Cardiac septum (tissue), 1 donor: ENCODE measurements at regions of chr6 and their contacts with region 1.

Region 1: DNA sequence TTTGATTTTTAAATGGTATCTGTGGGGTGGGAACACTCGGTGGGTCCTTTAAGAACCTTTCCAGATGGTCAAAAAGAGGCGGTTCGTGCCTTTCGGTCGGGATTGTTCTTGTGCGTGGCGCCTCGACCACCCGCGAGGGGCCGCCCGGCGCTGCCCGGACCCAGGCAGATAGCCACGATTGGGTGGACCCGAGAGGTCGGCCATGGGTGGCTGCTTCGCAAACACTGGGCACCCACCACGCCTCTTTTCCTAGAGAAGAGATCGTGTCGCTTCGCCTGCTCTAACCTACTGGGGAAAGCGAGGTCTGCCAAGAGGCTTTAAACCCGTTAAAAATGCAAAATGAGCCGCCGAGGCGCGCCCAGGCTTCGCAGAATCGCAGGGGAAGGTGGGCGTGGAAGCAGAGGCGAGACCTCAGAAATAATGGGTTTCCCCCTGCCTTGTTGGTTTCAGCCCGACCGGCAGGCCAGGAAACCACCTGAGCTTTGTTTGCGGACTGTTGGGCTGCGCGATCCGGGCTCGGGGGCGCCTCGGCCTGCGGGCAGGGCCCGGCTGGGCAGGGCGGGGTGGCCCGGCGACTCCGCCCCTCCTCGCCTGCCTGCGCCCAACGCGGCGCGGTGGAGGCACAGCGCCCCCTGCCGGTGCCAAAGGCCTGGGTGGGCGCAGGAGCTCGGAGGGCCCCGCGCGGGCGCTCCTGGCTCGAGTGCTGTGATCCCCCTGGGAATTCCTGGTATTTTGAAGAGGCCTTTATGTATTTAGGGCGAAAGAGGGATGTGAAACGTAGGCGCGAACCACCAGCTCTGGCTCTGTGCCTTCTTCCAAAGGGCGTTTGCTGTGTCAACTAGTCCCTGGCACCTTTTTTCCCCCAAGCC is 1.6 kb downstream of the MARCKS start:
- DNase-seq: peak; percentile 95

Region 2: DNA sequence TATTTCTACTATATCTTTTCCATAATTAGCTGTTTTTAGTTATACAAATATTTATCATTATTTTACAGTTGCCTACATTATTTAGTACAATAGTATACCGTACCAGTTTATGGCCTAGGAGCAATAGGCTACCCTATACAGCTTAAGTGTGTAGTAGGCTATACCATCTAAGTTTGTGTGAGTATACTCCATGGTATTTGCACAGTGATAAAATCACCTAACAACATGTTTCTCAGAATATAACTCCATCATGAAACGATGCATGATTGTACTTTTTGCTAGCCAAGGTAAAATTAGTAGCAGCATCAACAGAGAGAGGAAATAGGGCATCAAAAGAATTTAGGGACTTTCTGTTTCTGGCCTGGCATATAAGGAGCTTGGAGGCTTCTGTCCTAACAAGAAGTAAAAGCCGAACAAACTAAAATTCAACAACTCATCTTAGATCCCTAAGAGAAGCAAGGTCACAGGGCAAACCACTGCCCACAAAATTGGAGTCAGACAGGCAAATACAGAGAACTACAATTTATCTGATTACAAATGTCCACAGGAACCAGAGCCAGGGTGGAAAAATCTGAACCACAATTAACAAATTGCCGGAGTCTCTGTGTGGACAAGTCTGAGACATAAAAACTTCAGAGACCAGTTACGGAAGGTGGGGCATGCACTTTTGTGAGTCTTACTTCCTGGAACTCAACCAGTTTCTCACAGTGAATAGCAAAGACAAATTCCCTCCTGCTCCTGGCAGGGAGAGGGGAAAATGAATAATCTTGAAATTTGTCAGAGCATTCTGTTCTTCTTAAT is 840.2 kb before region 1 on chr6:
- intact Hi-C with region 1: loop called (anchors 10 kb)
- DNase-seq: no peak

Region 3: GRCh38 chr6:113182370-113183141 is 676.2 kb before region 1 on chr6:
- intact Hi-C with region 1: loop called (anchors 10 kb)
- DNase-seq: no peak

Region 4: GRCh38 chr6:113564371-113565161 is 294.1 kb before region 1 on chr6:
- intact Hi-C with region 1: loop called (anchors 2 kb)
- DNase-seq: peak; percentile 90

Region 5: GRCh38 chr6:113879186-113880096 is 20.7 kb after region 1 on chr6:
- intact Hi-C with region 1: no loop called
- DNase-seq: no peak

Region 6: GRCh38 chr6:113970805-113971676 is 112.3 kb after region 1 on chr6 and contains the start of gene HDAC2:
- intact Hi-C with region 1: no loop called
- DNase-seq: peak; percentile 93
- total RNA-seq, gene HDAC2: 47.7 TPM

Region 7: DNA sequence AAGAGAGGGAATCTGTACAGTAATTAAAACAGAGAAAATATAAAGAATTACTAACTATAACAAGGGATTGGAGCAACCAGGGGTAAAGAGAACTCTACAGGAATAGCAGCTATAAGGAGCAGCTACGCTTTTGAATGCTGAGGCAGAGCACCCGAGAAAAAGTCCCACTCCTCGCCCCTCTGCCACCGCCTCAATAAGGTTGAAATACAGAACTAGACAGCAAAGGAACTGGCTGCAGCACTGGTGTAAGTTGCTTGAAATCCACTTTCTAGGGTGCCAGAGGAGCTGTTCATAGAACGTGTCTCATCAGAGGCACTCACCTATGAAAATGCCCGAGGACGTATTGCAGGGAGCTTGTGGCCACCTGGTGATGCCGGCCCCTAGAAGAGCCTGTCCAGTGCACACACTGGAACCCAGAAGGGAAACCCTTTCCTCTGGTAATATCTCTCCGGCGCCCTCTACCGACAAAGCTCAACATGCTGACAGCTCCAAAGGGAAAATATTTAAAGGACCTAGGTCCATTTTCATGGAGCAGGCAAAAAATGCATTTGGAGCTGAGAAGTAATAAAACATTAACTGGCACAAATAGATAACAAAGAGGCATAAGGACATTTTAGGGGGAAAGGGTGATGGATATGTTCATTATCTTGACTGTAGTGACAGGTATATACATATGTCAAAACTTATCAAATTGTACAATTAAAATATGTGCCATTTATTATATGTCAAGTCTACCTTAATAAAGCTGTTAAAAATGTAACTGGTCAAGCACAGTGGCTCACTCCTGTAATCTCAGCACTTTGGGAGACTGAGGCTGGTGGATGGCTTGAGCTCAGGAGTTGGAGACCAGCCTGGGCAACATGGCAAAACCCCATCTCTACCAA is 249.6 kb after region 1 on chr6:
- intact Hi-C with region 1: no loop called
- DNase-seq: no peak